Activated CD4-positive, alpha-beta memory T cell treated with anti-CD3 and anti-CD28 coated beads for 36 hours (primary cell): ENCODE measurements at regions of chr13 and their contacts with region 1.

Region 1: GRCh38 chr13:21670883-21671619 is at the start of gene FGF9:
- DNase-seq: peak; percentile 86
- H3K4me3 Mint-ChIP-seq: peak within 1 kb of the TSS; percentile 85
- H3K27ac Mint-ChIP-seq: peak within 1 kb of the TSS; percentile 40
- H3K4me1 Mint-ChIP-seq: peaks cover 42% of the 10 kb centered on the region
- H3K27me3 Mint-ChIP-seq: peaks cover 28% of the 10 kb centered on the region
- total RNA-seq, gene FGF9: 0.07 TPM in 1 of 2 experiments, not detected in the other

Region 2: GRCh38 chr13:21176220-21176982 is 494.6 kb before region 1 on chr13 and contains the starts of genes MRPL57 and SKA3:
- CTCF ChIA-PET with region 1: no interaction called
- POLR2A ChIA-PET with region 1: no interaction called
- intact Hi-C with region 1: loop called (anchors 5 kb)
- DNase-seq: peak; percentile 96
- H3K4me3 Mint-ChIP-seq: peak within 1 kb of the TSS; percentile 99
- H3K27ac Mint-ChIP-seq: peak within 1 kb of the TSS; percentile 96
- H3K4me1 Mint-ChIP-seq: peaks cover 18% of the 10 kb centered on the region
- H3K27me3 Mint-ChIP-seq: no peaks in the 10 kb centered on the region
- total RNA-seq, gene MRPL57: 20.8 to 23.1 TPM
- total RNA-seq, gene SKA3: 34.0 to 36.2 TPM

Region 3: GRCh38 chr13:21389124-21389523 is 281.9 kb before region 1 on chr13:
- CTCF ChIA-PET with region 1: no interaction called
- POLR2A ChIA-PET with region 1: no interaction called
- intact Hi-C with region 1: no loop called
- DNase-seq: no peak
- H3K4me3 Mint-ChIP-seq: no peak overlapping the region
- H3K27ac Mint-ChIP-seq: no peak overlapping the region
- H3K4me1 Mint-ChIP-seq: no peaks in the 10 kb centered on the region
- H3K27me3 Mint-ChIP-seq: no peaks in the 10 kb centered on the region

Region 4: GRCh38 chr13:21603531-21604448 is 67.3 kb before region 1 on chr13 and contains the start of gene MICU2:
- CTCF ChIA-PET with region 1: interaction called, 4 read pairs
- POLR2A ChIA-PET with region 1: interaction called, 12 read pairs
- intact Hi-C with region 1: loop called (anchors 1 kb)
- DNase-seq: peak; percentile 97
- H3K4me3 Mint-ChIP-seq: peak within 1 kb of the TSS; percentile 81
- H3K27ac Mint-ChIP-seq: peak within 1 kb of the TSS; percentile 89
- H3K4me1 Mint-ChIP-seq: peaks cover 26% of the 10 kb centered on the region
- H3K27me3 Mint-ChIP-seq: peaks cover 5% of the 10 kb centered on the region
- total RNA-seq, gene MICU2: 32.6 to 33.3 TPM

Region 5: DNA sequence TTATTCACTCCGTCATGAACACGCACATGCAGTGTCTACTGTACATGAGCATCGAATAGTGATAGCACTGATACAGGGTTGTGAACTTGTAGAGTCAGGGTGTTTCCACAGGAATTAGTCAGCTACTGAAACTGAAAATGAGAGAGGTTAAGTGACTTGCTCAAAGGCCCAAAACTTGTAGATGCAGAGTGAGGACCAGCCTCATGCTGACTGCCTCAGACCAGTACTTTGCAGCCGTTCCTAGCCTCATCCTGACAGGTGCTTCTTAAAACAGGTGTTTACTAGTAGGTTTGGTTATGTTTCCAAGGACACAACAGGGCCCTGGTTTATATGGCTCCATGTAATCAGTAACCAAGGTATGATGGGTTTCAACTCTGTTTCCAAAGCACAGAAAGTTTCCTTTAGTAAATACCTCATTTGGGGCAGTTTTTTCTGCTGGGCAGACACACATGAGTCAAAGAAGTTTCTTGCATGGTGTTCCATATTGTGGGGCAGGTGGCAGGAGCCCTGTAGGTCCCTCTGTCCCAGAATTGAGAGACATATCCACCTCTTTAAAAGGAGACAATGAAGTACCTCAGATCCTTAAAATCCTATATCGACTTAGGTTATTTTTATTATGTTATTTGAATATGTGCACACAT is 15.8 kb after region 1 on chr13:
- CTCF ChIA-PET with region 1: interaction called, 6 read pairs
- POLR2A ChIA-PET with region 1: no interaction called
- intact Hi-C with region 1: loop called (anchors 1 kb)
- DNase-seq: peak; percentile 64
- H3K4me3 Mint-ChIP-seq: no peak overlapping the region
- H3K27ac Mint-ChIP-seq: peak overlapping the region; percentile 26
- H3K4me1 Mint-ChIP-seq: peaks cover 10% of the 10 kb centered on the region
- H3K27me3 Mint-ChIP-seq: peaks cover 2% of the 10 kb centered on the region

Region 6: DNA sequence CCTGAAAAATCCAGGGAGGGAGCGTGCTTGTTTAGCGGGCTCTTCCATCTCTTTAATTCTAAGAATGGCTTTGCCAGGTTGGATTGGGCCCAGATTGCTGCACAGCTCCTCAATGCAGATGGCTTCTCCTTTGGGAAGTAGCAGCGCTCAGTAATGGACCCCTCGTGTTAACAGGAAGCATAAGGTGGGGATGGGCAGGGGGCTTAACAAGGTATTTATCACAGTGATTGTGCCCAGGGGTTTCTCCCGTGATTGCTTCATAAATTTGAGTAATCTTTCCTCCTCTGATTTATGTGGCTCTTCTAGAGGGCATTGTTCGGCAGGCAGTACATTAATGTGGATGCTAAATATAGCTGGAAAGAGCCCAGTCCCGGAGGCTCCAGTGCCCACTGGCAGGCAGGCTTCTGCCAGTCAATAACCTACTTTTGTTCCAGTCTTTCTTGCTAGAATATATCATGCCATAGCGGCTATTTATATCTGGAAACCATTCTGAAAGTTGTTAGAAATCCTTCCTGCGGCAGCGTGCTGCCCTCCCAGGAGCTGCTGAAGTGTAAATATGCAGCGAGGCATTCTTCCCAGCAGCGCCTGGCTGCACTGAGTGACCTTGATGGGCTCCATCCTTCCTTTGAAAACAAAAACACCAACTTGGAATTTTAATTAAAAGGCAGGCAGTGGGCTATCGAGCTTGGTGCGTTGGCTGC is 64.8 kb after region 1 on chr13:
- CTCF ChIA-PET with region 1: no interaction called
- POLR2A ChIA-PET with region 1: no interaction called
- intact Hi-C with region 1: no loop called
- DNase-seq: no peak
- H3K4me3 Mint-ChIP-seq: no peak overlapping the region
- H3K27ac Mint-ChIP-seq: no peak overlapping the region
- H3K4me1 Mint-ChIP-seq: no peaks in the 10 kb centered on the region
- H3K27me3 Mint-ChIP-seq: peaks cover 9% of the 10 kb centered on the region

Region 7: GRCh38 chr13:22161871-22162270 is 490.8 kb after region 1 on chr13:
- CTCF ChIA-PET with region 1: no interaction called
- POLR2A ChIA-PET with region 1: no interaction called
- intact Hi-C with region 1: loop called (anchors 5 kb)
- DNase-seq: no peak
- H3K4me3 Mint-ChIP-seq: peak overlapping the region; percentile 34
- H3K27ac Mint-ChIP-seq: no peak overlapping the region
- H3K4me1 Mint-ChIP-seq: peaks cover 39% of the 10 kb centered on the region
- H3K27me3 Mint-ChIP-seq: no peaks in the 10 kb centered on the region

Region 8: GRCh38 chr13:23609414-23609760 is 1938.3 kb after region 1 on chr13:
- CTCF ChIA-PET with region 1: no interaction called
- POLR2A ChIA-PET with region 1: no interaction called
- intact Hi-C with region 1: no loop called
- DNase-seq: no peak
- H3K4me3 Mint-ChIP-seq: no peak overlapping the region
- H3K27ac Mint-ChIP-seq: no peak overlapping the region
- H3K4me1 Mint-ChIP-seq: peaks cover 8% of the 10 kb centered on the region
- H3K27me3 Mint-ChIP-seq: peaks cover 18% of the 10 kb centered on the region